ENCODE measurements at regions of chr3 and their contacts with region 1.

Region 1: DNA sequence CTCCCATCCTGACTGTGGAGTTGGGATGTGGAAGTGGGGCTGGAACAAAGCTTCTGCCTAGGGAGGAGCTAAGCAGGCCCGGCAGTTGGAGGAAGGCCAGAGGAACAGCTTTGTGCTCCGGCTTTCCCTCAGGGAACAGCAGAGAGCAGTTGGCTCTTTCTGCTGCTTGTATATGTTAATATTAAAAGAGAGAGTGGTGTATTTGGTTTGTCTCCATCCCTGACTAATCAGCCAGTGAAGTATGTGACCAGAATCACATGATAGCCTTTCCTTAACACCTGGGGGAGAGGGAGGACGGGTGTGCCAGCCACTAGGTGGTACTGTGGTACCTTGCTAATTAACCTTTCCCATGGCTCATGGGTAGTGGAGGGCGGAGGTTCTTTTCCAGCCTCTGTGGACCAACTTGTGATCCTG is 10.0 kb downstream of the EIF2B5 start:
- DNase-seq: peak; percentile 33 to 58 (median 46)
- ATAC-seq: peak; percentile 81
- H3K4me3 ChIP-seq: no peak overlapping the region
- H3K27ac ChIP-seq: no peak overlapping the region
- H3K4me1 ChIP-seq: peaks cover 0 to 3% of the 10 kb centered on the region in 2 experiments; a peak in 2 of 5 replicates
- H3K27me3 ChIP-seq: no peaks in the 10 kb centered on the region
- CTCF ChIP-seq: peak; percentile 52 to 69 (median 59)
- EP300 ChIP-seq: no peak
- POLR2A ChIP-seq: no peak
- RAD21 ChIP-seq: peak; percentile 47 to 65

Region 2: GRCh38 chr3:183247011-183247589 is 898.0 kb before region 1 on chr3:
- CTCF ChIA-PET with region 1: no interaction called
- POLR2A ChIA-PET with region 1: no interaction called
- in situ Hi-C with region 1: no loop called
- intact Hi-C with region 1: no loop called
- DNase-seq: no peak
- ATAC-seq: no peak
- H3K4me3 ChIP-seq: no peak overlapping the region
- H3K27ac ChIP-seq: no peak overlapping the region
- H3K4me1 ChIP-seq: no peaks in the 10 kb centered on the region; a peak in 1 of 5 replicates
- H3K27me3 ChIP-seq: no peaks in the 10 kb centered on the region; a peak in 1 of 5 replicates
- CTCF ChIP-seq: no peak
- EP300 ChIP-seq: no peak
- POLR2A ChIP-seq: no peak
- RAD21 ChIP-seq: no peak

Region 3: GRCh38 chr3:184241447-184242296 is 96.6 kb after region 1 on chr3:
- CTCF ChIA-PET with region 1: no interaction called
- POLR2A ChIA-PET with region 1: no interaction called
- in situ Hi-C with region 1: no loop called
- intact Hi-C with region 1: loop called (anchors 5 kb)
- DNase-seq: peak; percentile 65 to 82 (median 74)
- ATAC-seq: peak; percentile 97
- H3K4me3 ChIP-seq: no peak overlapping the region
- H3K27ac ChIP-seq: no peak overlapping the region
- H3K4me1 ChIP-seq: peaks cover 0 to 19% of the 10 kb centered on the region in 2 experiments; a peak in 3 of 5 replicates
- H3K27me3 ChIP-seq: peaks cover 0 to 12% of the 10 kb centered on the region in 2 experiments; a peak in 1 of 5 replicates
- CTCF ChIP-seq: peak; percentile 79 to 93 (median 84)
- EP300 ChIP-seq: no peak
- POLR2A ChIP-seq: no peak; the same call in none of the 2 replicates
- RAD21 ChIP-seq: peak; percentile 59 to 85

Region 4: DNA sequence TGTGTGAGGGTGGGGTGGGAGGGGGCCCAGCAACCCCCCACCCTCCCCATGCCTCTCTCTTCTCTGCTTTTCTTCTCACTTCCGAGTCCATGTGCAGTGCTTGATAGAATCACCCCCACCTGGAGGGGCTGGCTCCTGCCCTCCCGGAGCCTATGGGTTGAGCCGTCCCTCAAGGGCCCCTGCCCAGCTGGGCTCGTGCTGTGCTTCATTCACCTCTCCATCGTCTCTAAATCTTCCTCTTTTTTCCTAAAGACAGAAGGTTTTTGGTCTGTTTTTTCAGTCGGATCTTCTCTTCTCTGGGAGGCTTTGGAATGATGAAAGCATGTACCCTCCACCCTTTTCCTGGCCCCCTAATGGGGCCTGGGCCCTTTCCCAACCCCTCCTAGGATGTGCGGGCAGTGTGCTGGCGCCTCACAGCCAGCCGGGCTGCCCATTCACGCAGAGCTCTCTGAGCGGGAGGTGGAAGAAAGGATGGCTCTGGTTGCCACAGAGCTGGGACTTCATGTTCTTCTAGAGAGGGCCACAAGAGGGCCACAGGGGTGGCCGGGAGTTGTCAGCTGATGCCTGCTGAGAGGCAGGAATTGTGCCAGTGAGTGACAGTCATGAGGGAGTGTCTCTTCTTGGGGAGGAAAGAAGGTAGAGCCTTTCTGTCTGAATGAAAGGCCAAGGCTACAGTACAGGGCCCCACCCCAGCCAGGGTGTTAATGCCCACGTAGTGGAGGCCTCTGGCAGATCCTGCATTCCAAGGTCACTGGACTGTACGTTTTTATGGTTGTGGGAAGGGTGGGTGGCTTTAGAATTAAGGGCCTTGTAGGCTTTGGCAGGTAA is 200.4 kb after region 1 on chr3:
- CTCF ChIA-PET with region 1: no interaction called
- POLR2A ChIA-PET with region 1: no interaction called
- in situ Hi-C with region 1: no loop called
- intact Hi-C with region 1: no loop called
- DNase-seq: peak; percentile 82 to 88 (median 84)
- ATAC-seq: peak; percentile 87
- H3K4me3 ChIP-seq: no peak overlapping the region
- H3K27ac ChIP-seq: no peak overlapping the region; the same call in 1 of the 3 replicates
- H3K4me1 ChIP-seq: peaks cover 48 to 56% of the 10 kb centered on the region in 2 experiments
- H3K27me3 ChIP-seq: no peaks in the 10 kb centered on the region
- CTCF ChIP-seq: peak; percentile 62 to 81 (median 77)
- EP300 ChIP-seq: no peak
- POLR2A ChIP-seq: no peak
- RAD21 ChIP-seq: peak; percentile 14 to 54; a peak in 2 of 4 replicates

Region 5: DNA sequence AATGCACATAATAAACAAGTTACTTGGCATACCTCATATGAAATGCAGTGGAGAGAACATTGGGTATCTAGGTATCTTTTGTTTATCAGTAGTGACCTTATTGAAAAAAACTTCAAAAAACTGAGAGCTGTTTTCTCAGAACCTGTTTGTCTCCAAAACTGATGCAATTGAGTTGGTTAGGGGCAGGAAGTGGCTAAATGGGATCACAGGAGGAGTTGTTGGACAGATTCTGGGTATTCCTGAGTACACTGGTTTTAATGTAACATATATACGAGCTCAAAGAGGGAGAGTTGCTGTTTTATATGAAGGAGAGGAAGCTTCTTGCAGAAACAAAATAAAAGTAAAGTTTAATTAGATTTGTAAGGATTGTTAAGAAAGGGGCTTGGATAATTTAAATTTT is 848.3 kb after region 1 on chr3:
- CTCF ChIA-PET with region 1: no interaction called
- POLR2A ChIA-PET with region 1: no interaction called
- in situ Hi-C with region 1: no loop called
- intact Hi-C with region 1: no loop called
- DNase-seq: peak in 2 of 4 experiments; percentile 7 to 11
- ATAC-seq: peak; percentile 81
- H3K4me3 ChIP-seq: no peak overlapping the region
- H3K27ac ChIP-seq: no peak overlapping the region
- H3K4me1 ChIP-seq: no peaks in the 10 kb centered on the region
- H3K27me3 ChIP-seq: no peaks in the 10 kb centered on the region
- CTCF ChIP-seq: peak in 1 of 3 experiments; percentile 14; a peak in 1 of 6 replicates
- EP300 ChIP-seq: no peak
- POLR2A ChIP-seq: no peak
- RAD21 ChIP-seq: peak in 1 of 2 experiments; percentile 34; a peak in 2 of 4 replicates

Measured in K562 (cell line).